Astrocyte of the cerebellum (primary cell): ENCODE measurements at regions of chr16 and their contacts with region 1.

Region 1: GRCh38 chr16:49602201-49602975 is 228.8 kb downstream of the C16orf78 start:
- DNase-seq: no peak
- H3K4me3 ChIP-seq: no peak overlapping the region
- CTCF ChIP-seq: no peak

Region 2: DNA sequence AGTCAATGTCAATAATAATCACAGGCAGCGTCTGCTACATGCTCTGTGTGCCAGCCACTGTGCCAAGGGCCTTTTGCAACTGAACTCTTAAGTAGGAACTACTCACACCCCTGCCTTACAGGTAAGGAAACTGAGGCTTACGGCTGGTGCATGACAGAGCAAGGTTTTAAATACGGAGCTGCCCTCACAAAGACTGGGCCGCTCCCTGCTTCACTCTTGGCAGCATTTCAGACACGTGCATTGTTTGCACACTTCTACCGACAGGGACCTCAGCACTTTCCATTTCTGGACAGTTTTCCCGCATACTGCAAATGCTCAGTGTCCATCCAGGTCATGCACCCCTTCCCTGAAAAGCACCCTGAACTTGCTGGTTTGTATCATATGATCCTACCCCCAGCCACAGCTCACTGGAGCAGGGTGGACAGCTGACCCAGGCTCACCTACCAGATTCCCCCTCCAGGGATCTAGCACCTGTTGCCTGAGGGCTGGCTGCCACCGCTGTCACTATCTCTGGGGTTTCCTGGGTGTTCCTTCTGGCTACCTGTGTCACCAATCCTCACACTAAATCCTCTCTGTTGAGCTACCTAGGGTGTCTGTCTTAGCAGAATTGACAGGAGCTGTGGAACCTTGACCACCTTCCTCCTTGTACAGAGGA is 85.9 kb before region 1 on chr16:
- in situ Hi-C with region 1: loop called (anchors 5 kb)
- DNase-seq: no peak
- H3K4me3 ChIP-seq: no peak overlapping the region
- CTCF ChIP-seq: no peak

Region 3: GRCh38 chr16:49552313-49552928 is 50.0 kb before region 1 on chr16:
- in situ Hi-C with region 1: loop called (anchors 5 kb)
- DNase-seq: no peak
- H3K4me3 ChIP-seq: no peak overlapping the region
- CTCF ChIP-seq: no peak

Region 4: GRCh38 chr16:49652456-49653172 is 50.2 kb after region 1 on chr16:
- in situ Hi-C with region 1: no loop called
- DNase-seq: no peak
- H3K4me3 ChIP-seq: no peak overlapping the region
- CTCF ChIP-seq: no peak